Panc1 (cell line): ENCODE measurements at regions of chr15 and their contacts with region 1.

Region 1: DNA sequence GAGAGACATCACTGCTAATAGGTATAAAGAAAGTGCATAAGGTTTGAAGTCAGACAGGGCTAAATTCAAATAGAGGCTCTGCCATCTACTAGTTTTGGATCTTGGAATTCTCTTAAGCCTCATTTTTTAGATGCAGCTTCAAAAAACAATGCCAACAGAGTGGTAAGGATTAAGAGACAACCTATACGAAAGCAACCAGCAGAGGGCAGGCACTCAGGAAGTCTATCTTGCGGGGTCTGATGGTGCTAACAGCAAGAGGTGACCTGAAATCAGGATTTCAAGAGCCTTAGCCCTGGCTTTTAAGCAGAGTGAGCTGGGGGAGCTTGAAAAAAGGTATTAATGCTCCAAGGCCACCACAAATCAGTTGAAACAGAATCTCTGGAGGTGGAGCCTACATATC is 40.7 kb downstream of the LDHAL6B start:
- DNase-seq: peak; percentile 56
- ATAC-seq: peak; percentile 85
- H3K4me3 ChIP-seq: no peak overlapping the region
- H3K27ac ChIP-seq: peak overlapping the region; percentile 53
- H3K4me1 ChIP-seq: peaks cover 9% of the 10 kb centered on the region
- H3K27me3 ChIP-seq: no peaks in the 10 kb centered on the region
- CTCF ChIP-seq: peak; percentile 78

Region 2: GRCh38 chr15:59380904-59381610 is 133.7 kb after region 1 on chr15:
- CTCF ChIA-PET with region 1: interaction called, 15 read pairs
- POLR2A ChIA-PET with region 1: no interaction called
- in situ Hi-C with region 1: no loop called
- intact Hi-C with region 1: no loop called
- DNase-seq: no peak
- ATAC-seq: no peak
- H3K4me3 ChIP-seq: no peak overlapping the region
- H3K27ac ChIP-seq: no peak overlapping the region
- H3K4me1 ChIP-seq: no peaks in the 10 kb centered on the region
- H3K27me3 ChIP-seq: no peaks in the 10 kb centered on the region
- CTCF ChIP-seq: no peak